B cell (primary cell): ENCODE measurements at regions of chr3 and their contacts with region 1.

Region 1: GRCh38 chr3:185659942-185660921 is 74.1 kb downstream of the SENP2 start:
- DNase-seq: peak; percentile 74
- ATAC-seq: peak; percentile 74
- H3K4me3 ChIP-seq: no peak overlapping the region
- H3K4me3 Mint-ChIP-seq: no peak overlapping the region
- H3K27ac ChIP-seq: no peak overlapping the region
- H3K27ac Mint-ChIP-seq: no peak overlapping the region
- H3K4me1 ChIP-seq: peaks cover 3 to 4% of the 10 kb centered on the region in 2 donors
- H3K4me1 Mint-ChIP-seq: no peaks in the 10 kb centered on the region
- H3K27me3 ChIP-seq: peaks cover 0 to 3% (median 0%) of the 10 kb centered on the region in 4 experiments
- H3K27me3 Mint-ChIP-seq: peaks cover 21% of the 10 kb centered on the region
- CTCF ChIP-seq: peak; percentile 91

Region 2: DNA sequence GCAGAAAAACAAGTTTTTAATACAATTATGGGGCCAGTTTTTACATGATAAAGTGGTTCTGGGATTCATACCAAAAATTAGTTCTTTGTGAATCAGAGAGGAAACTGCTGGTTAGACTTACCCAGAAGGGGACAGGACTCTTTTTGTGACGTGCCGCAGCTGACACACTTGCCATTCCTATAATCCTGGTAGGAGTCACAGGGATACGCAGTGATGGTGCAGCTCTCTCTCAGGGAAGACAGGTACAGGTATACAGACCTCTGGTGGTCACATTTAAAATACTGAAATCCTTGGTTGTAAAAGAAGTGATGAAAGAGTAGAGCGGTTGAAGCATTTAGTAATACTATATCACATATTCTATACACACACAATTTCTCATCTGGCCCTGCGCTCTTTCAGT is 141.2 kb before region 1 on chr3:
- CTCF ChIA-PET with region 1: no interaction called
- POLR2A ChIA-PET with region 1: no interaction called
- intact Hi-C with region 1: no loop called
- DNase-seq: no peak
- ATAC-seq: no peak
- H3K4me3 ChIP-seq: no peak overlapping the region
- H3K4me3 Mint-ChIP-seq: no peak overlapping the region
- H3K27ac ChIP-seq: no peak overlapping the region
- H3K27ac Mint-ChIP-seq: no peak overlapping the region
- H3K4me1 ChIP-seq: no peaks in the 10 kb centered on the region
- H3K4me1 Mint-ChIP-seq: no peaks in the 10 kb centered on the region
- H3K27me3 ChIP-seq: peaks cover 0 to 6% (median 3%) of the 10 kb centered on the region in 4 experiments
- H3K27me3 Mint-ChIP-seq: peaks cover 27% of the 10 kb centered on the region
- CTCF ChIP-seq: no peak

Region 3: GRCh38 chr3:185649414-185649813 is 10.8 kb before region 1 on chr3:
- CTCF ChIA-PET with region 1: interaction called, 31 read pairs
- POLR2A ChIA-PET with region 1: no interaction called
- intact Hi-C with region 1: no loop called
- DNase-seq: no peak
- ATAC-seq: no peak
- H3K4me3 ChIP-seq: no peak overlapping the region
- H3K4me3 Mint-ChIP-seq: no peak overlapping the region
- H3K27ac ChIP-seq: no peak overlapping the region
- H3K27ac Mint-ChIP-seq: no peak overlapping the region
- H3K4me1 ChIP-seq: peaks cover 0 to 11% of the 10 kb centered on the region in 2 donors
- H3K4me1 Mint-ChIP-seq: peaks cover 9% of the 10 kb centered on the region
- H3K27me3 ChIP-seq: no peaks in the 10 kb centered on the region
- H3K27me3 Mint-ChIP-seq: no peaks in the 10 kb centered on the region
- CTCF ChIP-seq: no peak

Region 4: GRCh38 chr3:185677146-185677829 is 17.1 kb after region 1 on chr3:
- CTCF ChIA-PET with region 1: interaction called, 24 read pairs
- POLR2A ChIA-PET with region 1: no interaction called
- intact Hi-C with region 1: no loop called
- DNase-seq: peak; percentile 19
- ATAC-seq: no peak
- H3K4me3 ChIP-seq: no peak overlapping the region
- H3K4me3 Mint-ChIP-seq: no peak overlapping the region
- H3K27ac ChIP-seq: no peak overlapping the region
- H3K27ac Mint-ChIP-seq: no peak overlapping the region
- H3K4me1 ChIP-seq: no peaks in the 10 kb centered on the region
- H3K4me1 Mint-ChIP-seq: no peaks in the 10 kb centered on the region
- H3K27me3 ChIP-seq: peaks cover 0 to 3% (median 0%) of the 10 kb centered on the region in 4 experiments
- H3K27me3 Mint-ChIP-seq: peaks cover 18% of the 10 kb centered on the region
- CTCF ChIP-seq: peak; percentile 33

Region 5: DNA sequence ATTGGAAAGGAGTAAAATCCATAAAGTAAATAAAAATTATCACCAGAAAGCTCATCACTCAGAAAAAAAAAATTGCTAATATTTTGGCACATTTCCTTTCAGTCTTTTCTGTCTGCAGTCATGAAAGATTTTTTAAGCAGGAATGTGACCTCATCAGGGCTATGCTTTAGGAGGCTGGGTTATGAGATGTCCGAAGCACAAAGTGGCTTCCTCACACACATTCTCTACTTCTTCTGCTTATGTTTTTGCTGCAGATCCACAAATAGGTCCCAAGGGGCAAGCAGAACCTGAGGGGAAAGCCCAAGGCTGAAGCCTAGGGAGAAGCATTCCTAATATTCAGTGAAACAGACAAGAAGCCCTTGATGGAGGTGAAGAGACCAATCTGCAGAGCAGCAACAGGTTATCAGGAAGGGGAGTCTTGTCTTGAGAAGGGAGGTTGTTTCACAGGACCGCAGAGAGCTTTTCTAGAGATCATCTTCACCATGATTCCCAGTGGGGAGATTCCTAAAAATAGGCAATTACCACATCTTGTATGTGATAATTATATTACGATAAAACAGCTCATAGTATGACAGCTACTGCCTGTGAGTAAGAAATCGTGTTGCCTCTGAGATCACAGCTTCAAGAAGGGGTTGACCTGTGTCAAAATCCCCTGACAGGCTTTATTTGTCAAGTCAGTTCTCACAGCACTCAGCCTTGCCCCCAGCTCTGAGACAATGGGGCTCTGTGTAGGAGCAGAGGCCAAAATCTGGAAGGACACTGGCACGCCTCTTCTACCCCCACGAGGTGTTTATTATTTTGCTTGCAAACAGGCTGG is 104.1 kb after region 1 on chr3:
- CTCF ChIA-PET with region 1: interaction called, 48 read pairs
- POLR2A ChIA-PET with region 1: no interaction called
- intact Hi-C with region 1: loop called (anchors 1 kb)
- DNase-seq: no peak
- ATAC-seq: no peak
- H3K4me3 ChIP-seq: no peak overlapping the region
- H3K4me3 Mint-ChIP-seq: no peak overlapping the region
- H3K27ac ChIP-seq: no peak overlapping the region
- H3K27ac Mint-ChIP-seq: no peak overlapping the region
- H3K4me1 ChIP-seq: no peaks in the 10 kb centered on the region
- H3K4me1 Mint-ChIP-seq: no peaks in the 10 kb centered on the region
- H3K27me3 ChIP-seq: peaks cover 0 to 8% (median 3%) of the 10 kb centered on the region in 4 experiments
- H3K27me3 Mint-ChIP-seq: peaks cover 32% of the 10 kb centered on the region
- CTCF ChIP-seq: no peak

Region 6: DNA sequence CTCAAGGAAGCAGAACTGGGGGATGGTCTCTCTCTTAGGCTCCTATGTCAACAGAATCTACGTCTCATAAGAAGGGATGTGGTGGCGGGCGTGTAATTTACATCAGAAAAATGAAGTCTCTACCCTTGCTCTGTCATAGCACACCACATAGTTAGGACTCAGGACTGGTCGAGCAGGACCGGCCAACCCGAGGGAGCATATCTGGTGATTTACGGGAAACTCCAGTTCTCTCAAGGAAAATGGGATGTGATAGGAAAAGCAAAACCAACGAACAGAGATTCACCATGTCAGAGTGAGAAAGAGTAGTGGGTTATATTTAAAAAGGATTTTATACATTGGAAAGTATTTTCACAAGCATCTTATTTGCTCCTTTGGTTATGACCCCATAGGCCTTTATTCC is 109.9 kb after region 1 on chr3:
- CTCF ChIA-PET with region 1: interaction called, 48 read pairs
- POLR2A ChIA-PET with region 1: no interaction called
- intact Hi-C with region 1: loop called (anchors 1 kb)
- DNase-seq: no peak
- ATAC-seq: no peak
- H3K4me3 ChIP-seq: no peak overlapping the region
- H3K4me3 Mint-ChIP-seq: no peak overlapping the region
- H3K27ac ChIP-seq: no peak overlapping the region
- H3K27ac Mint-ChIP-seq: no peak overlapping the region
- H3K4me1 ChIP-seq: no peaks in the 10 kb centered on the region
- H3K4me1 Mint-ChIP-seq: no peaks in the 10 kb centered on the region
- H3K27me3 ChIP-seq: peaks cover 0 to 7% (median 0%) of the 10 kb centered on the region in 4 experiments
- H3K27me3 Mint-ChIP-seq: peaks cover 9% of the 10 kb centered on the region
- CTCF ChIP-seq: no peak